Activated CD4-positive, alpha-beta T cell treated with anti-CD3 and anti-CD28 coated beads for 36 hours (primary cell): ENCODE measurements at regions of chr7 and their contacts with region 1.

Region 1: GRCh38 chr7:135645296-135645904 is 16.9 kb upstream of the STMP1 start:
- DNase-seq: no peak
- ATAC-seq: peak; percentile 58
- H3K4me3 Mint-ChIP-seq: no peak overlapping the region
- H3K27ac Mint-ChIP-seq: no peak overlapping the region
- H3K4me1 Mint-ChIP-seq: no peaks in the 10 kb centered on the region
- H3K27me3 Mint-ChIP-seq: no peaks in the 10 kb centered on the region

Region 2: DNA sequence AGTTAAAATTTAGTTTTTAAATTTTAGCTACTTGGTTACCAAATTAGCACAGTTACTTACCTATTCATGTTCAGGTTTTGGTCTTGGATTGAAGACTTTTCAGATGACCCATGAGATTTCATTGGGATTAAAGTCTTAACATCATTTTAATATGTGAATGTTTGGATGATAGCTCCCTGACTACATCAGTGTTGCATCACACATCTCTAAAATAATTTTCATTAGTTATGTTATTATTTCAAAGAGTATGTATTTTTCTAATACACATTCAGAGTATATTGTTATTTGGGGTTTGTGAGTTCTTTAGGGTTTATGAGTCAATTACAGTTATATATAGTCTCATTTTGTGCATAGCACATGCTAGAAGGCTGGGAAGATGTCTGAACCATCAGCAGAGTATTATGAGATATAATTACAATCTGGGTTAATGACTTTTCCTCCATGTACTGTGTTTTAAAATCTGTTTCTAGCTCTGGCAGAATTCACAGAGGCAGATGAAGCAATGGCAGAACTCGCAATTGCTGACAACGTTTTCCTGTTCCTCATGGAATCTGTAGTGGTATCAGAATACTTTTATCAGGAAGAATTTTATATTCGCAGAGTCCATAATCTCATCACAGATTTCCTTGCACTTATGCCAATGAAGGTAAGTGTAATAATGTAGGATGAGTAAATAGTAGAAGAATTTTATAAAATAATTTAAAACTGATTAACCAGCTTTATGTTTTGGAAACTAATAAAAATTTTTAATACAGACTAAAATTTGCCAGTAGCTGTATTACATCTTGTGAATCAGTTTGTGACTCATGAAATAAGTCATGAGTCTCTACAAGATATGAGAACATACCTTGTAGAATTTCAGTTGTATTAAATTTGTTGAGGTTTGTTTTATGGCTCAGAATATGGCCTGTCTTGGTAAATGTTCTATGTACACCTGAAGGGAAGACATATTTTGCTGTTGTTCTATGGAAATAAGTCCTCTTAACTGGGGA is 60.7 kb before region 1 on chr7:
- CTCF ChIA-PET with region 1: interaction called, 19 read pairs
- POLR2A ChIA-PET with region 1: no interaction called
- intact Hi-C with region 1: no loop called
- DNase-seq: no peak
- ATAC-seq: no peak
- H3K4me3 Mint-ChIP-seq: no peak overlapping the region
- H3K27ac Mint-ChIP-seq: no peak overlapping the region
- H3K4me1 Mint-ChIP-seq: no peaks in the 10 kb centered on the region
- H3K27me3 Mint-ChIP-seq: no peaks in the 10 kb centered on the region

Region 3: GRCh38 chr7:135616136-135616535 is 29.3 kb before region 1 on chr7:
- CTCF ChIA-PET with region 1: interaction called, 19 read pairs
- POLR2A ChIA-PET with region 1: no interaction called
- intact Hi-C with region 1: no loop called
- DNase-seq: no peak
- ATAC-seq: no peak
- H3K4me3 Mint-ChIP-seq: no peak overlapping the region
- H3K27ac Mint-ChIP-seq: no peak overlapping the region
- H3K4me1 Mint-ChIP-seq: no peaks in the 10 kb centered on the region
- H3K27me3 Mint-ChIP-seq: no peaks in the 10 kb centered on the region

Region 4: DNA sequence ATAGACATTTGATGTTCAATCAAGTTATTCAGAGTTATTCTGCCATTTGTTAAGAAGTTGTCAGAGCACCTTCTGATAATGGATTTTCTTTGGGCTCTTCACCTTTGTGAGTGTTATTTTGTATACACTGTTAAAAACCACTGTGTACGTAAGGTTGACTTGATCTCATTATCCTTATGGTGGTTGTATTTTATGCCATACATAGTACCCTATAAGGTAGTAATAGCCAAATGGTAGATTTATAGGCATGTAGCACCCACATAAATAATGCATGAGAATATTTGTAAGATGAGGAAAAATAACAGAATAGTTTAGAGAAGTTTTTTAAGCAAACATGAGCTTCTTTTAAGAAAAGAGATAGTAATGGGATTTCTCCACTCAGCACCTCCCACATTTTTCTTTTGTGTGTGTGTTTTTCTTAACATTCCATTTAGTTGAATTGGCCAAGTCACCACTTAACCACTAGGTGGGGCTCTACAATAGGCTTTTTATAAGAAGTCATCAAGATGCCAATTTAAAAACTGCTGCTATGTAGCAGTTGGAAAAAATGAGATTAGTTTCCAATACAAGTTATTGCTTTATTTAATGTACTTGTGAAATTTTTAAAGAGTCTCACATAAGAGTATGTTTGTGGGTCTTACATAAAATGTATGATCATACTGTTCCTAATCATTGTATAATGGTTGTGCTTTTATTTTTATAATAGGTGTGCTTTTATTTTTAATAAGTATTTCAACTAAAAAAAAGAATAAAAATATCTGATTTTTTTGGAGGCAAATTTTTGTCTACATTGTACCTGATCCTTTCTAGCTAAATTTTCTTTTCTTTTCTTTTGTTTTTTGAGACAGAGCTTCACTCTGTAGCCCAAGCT is 24.2 kb before region 1 on chr7:
- CTCF ChIA-PET with region 1: interaction called, 19 read pairs
- POLR2A ChIA-PET with region 1: no interaction called
- intact Hi-C with region 1: no loop called
- DNase-seq: peak; percentile 32
- ATAC-seq: no peak
- H3K4me3 Mint-ChIP-seq: no peak overlapping the region
- H3K27ac Mint-ChIP-seq: no peak overlapping the region
- H3K4me1 Mint-ChIP-seq: no peaks in the 10 kb centered on the region
- H3K27me3 Mint-ChIP-seq: no peaks in the 10 kb centered on the region

Region 5: DNA sequence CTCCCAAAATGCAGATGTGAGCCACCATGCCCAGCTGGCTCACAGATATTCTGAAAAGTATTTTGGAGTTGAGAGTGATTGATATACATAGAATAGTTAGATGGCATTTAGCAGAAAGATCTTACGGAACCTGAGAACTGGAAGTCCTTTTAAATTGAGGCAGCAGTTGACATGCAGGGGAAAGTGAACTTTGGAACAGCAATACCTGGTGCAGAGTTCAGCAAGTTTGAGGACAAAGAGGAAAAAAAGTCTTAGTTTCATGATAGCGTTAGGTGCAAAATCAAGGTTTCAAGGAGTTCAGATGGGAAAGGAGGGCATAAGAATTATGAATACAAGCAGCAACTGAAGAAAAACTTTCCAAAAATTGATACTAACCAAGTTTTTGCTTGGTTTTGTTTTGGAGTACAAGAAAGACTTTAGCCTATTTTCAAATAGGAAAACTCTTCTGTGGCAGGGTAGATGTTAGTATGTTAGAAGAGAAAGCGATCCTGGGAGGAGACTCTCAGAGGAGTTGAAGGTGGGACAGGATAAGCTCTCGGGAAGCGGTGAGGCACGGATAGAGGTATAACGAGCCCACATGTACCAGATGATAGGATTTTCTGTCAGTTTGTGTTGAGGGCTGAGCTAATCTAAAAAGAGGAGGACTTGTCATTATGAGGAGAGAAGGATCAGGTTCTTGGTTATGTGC is 11.1 kb before region 1 on chr7:
- CTCF ChIA-PET with region 1: interaction called, 34 read pairs
- POLR2A ChIA-PET with region 1: no interaction called
- intact Hi-C with region 1: no loop called
- DNase-seq: no peak
- ATAC-seq: no peak
- H3K4me3 Mint-ChIP-seq: no peak overlapping the region
- H3K27ac Mint-ChIP-seq: no peak overlapping the region
- H3K4me1 Mint-ChIP-seq: no peaks in the 10 kb centered on the region
- H3K27me3 Mint-ChIP-seq: no peaks in the 10 kb centered on the region